ENCODE measurements at regions of chr16 and their contacts with region 1.

Region 1: GRCh38 chr16:83085660-83086059 is 458.9 kb downstream of the CDH13 start:
- DNase-seq: no peak
- H3K4me3 ChIP-seq: no peak overlapping the region
- H3K27ac ChIP-seq: no peak overlapping the region
- H3K4me1 ChIP-seq: no peaks in the 10 kb centered on the region
- H3K27me3 ChIP-seq: no peaks in the 10 kb centered on the region
- CTCF ChIP-seq: no peak

Region 2: GRCh38 chr16:83143788-83144187 is 58.1 kb after region 1 on chr16:
- intact Hi-C with region 1: loop called (anchors 10 kb)
- DNase-seq: no peak
- H3K4me3 ChIP-seq: no peak overlapping the region
- H3K27ac ChIP-seq: no peak overlapping the region
- H3K4me1 ChIP-seq: no peaks in the 10 kb centered on the region
- H3K27me3 ChIP-seq: no peaks in the 10 kb centered on the region
- CTCF ChIP-seq: no peak

Measured in ascending aorta (tissue), 2 donors.